Mammary epithelial cell (primary cell): ENCODE measurements at regions of chr12 and their contacts with region 1.

Region 1: GRCh38 chr12:55728939-55729823 is at the start of gene CD63:
- DNase-seq: peak; percentile 93
- H3K4me3 ChIP-seq: peak within 1 kb of the TSS; percentile 77 to 91 (median 89)
- H3K27ac ChIP-seq: peak within 1 kb of the TSS; percentile 81
- H3K4me1 ChIP-seq: peaks cover 24% of the 10 kb centered on the region
- H3K27me3 ChIP-seq: no peaks in the 10 kb centered on the region
- CTCF ChIP-seq: no peak
- total RNA-seq, gene CD63: 552 to 814 TPM

Region 2: DNA sequence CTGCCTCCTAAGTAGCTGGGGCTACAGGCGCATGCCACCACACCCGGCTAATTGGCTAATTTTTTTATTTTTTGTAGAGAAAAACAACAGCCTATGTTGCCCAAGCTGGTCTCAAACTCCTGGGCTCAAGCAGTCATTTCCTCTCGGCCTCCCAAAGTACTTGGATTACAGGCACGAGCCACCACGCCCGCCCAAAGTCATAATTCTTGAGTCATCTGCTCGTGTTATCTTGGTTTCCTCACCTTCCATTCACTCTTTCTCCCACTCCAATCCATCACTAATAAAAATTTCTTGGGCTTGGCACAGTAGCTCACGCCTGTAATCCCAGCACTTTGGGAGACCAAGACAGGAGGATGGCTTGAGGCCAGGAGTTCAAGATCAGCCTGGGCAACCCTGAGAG is 53.5 kb before region 1 on chr12:
- CTCF ChIA-PET with region 1: no interaction called
- dilution Hi-C with region 1: loop called (anchors 5 kb)
- in situ Hi-C with region 1: no loop called
- intact Hi-C with region 1: no loop called
- DNase-seq: no peak
- H3K4me3 ChIP-seq: no peak overlapping the region
- H3K27ac ChIP-seq: no peak overlapping the region
- H3K4me1 ChIP-seq: no peaks in the 10 kb centered on the region
- H3K27me3 ChIP-seq: no peaks in the 10 kb centered on the region
- CTCF ChIP-seq: no peak

Region 3: DNA sequence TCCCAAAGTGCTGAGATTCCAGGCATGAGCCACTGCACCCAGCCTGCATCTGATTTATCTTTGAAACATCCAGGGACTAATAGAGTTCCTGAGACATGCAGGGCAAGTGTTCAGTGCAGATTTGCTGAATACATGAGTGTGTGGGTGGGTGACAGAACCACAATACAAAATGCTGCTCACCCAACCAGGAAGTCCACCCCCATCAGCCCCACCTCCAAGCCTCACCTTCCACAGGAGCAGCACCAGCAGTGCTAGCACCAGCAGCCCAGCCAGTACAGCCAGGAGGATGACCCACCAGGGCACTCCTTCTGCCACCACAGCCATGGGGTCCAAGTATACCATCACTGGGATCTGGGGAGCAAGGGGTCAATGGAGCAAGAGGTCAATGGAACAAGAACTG is 41.4 kb before region 1 on chr12:
- CTCF ChIA-PET with region 1: no interaction called
- dilution Hi-C with region 1: no loop called
- in situ Hi-C with region 1: no loop called
- intact Hi-C with region 1: no loop called
- DNase-seq: peak; percentile 23
- H3K4me3 ChIP-seq: no peak overlapping the region
- H3K27ac ChIP-seq: no peak overlapping the region
- H3K4me1 ChIP-seq: no peaks in the 10 kb centered on the region
- H3K27me3 ChIP-seq: no peaks in the 10 kb centered on the region
- CTCF ChIP-seq: no peak

Region 4: GRCh38 chr12:55797068-55797467 is 67.9 kb after region 1 on chr12:
- CTCF ChIA-PET with region 1: no interaction called
- dilution Hi-C with region 1: no loop called
- in situ Hi-C with region 1: no loop called
- intact Hi-C with region 1: no loop called
- DNase-seq: peak; percentile 13
- H3K4me3 ChIP-seq: no peak overlapping the region
- H3K27ac ChIP-seq: no peak overlapping the region
- H3K4me1 ChIP-seq: no peaks in the 10 kb centered on the region
- H3K27me3 ChIP-seq: no peaks in the 10 kb centered on the region
- CTCF ChIP-seq: peak; percentile 36 to 37